Cardiac septum (tissue), 1 donor: ENCODE measurements at regions of chr11 and their contacts with region 1.

Region 1: GRCh38 chr11:58579192-58580129 is 598 bp downstream of the ZFP91 start:
- DNase-seq: peak; percentile 97

Region 2: GRCh38 chr11:57567515-57568329 is 1011.7 kb before region 1 on chr11 and contains the start of gene UBE2L6:
- intact Hi-C with region 1: loop called (anchors 5 kb)
- DNase-seq: peak; percentile 89
- total RNA-seq, gene UBE2L6: 15.8 TPM

Region 3: GRCh38 chr11:57657194-57658022 is 922.1 kb before region 1 on chr11 and contains the start of gene CLP1:
- intact Hi-C with region 1: loop called (anchors 2 kb)
- DNase-seq: peak; percentile 100
- total RNA-seq, gene CLP1: 5.8 TPM

Region 4: DNA sequence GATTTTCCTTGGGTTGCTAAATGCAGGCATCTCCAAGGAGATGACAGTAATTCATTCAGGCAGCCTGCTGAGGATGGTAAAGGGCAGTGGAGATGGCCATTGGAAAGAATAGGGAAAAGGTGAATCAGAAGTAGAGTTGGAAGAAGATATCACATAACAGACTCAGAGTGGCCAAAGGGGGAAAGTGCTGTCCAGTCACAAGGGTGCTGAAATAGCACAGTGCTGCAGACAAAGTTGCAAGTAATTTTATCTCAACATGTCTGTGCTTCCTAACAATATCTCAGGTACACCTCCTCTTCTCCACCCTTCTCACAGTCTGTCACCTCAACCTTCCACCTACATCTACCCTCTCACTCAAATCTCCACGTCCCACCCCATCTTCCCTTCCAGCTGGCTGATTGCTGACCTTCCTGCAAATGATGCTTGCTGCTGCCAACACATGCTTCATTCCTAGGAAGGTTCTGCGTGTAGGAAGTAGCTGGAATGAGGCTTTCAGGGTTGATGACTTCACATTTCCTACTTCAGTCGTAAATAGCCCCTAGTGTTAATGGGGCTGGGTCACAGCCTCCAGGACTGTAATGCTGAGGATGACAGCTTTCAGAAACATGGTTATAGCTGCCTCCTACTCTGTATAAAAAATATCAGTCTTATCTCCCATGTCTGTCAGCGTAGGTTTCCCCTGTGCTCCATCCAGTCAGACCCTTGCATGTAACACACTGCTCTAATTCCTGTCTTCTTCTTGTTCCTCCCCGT is 694.0 kb before region 1 on chr11:
- intact Hi-C with region 1: no loop called
- DNase-seq: no peak

Region 5: GRCh38 chr11:58616594-58616993 is 37.1 kb after region 1 on chr11:
- intact Hi-C with region 1: loop called (anchors 2 kb)
- DNase-seq: no peak

Region 6: DNA sequence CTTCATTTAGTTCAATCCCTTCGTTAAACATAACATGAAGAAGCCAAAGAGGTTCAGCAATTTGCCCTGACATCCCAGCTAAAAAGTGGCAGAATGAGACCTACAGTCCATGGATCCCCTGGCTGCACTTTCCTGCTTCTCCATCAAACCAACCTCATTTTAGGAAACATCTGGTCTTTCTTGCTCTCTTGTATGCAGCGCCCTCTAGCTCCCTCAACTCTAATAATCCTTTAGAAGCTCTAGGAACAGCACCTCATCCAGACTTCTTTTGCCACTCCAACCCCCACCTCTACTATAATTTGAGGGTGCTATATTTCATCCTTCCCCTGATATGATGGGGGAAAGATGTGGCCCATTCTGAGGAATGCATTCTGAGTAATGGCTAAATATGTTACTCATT is 50.4 kb after region 1 on chr11:
- intact Hi-C with region 1: loop called (anchors 5 kb)
- DNase-seq: no peak

Region 7: GRCh38 chr11:58675334-58676155 is 96.1 kb after region 1 on chr11:
- intact Hi-C with region 1: loop called (anchors 1 kb)
- DNase-seq: peak; percentile 82